Mucosa of descending colon (tissue), 3 donors: ENCODE measurements at regions of chr3 and their contacts with region 1.

Region 1: GRCh38 chr3:45760878-45761711 is 35.2 kb downstream of the SLC6A20 start:
- DNase-seq: peak in 2 of 3 donors; percentile 56 to 57
- ATAC-seq: peak; percentile 93
- H3K4me3 ChIP-seq: no peak overlapping the region
- H3K4me1 ChIP-seq: no peaks in the 10 kb centered on the region
- CTCF ChIP-seq: peak; percentile 63

Region 2: DNA sequence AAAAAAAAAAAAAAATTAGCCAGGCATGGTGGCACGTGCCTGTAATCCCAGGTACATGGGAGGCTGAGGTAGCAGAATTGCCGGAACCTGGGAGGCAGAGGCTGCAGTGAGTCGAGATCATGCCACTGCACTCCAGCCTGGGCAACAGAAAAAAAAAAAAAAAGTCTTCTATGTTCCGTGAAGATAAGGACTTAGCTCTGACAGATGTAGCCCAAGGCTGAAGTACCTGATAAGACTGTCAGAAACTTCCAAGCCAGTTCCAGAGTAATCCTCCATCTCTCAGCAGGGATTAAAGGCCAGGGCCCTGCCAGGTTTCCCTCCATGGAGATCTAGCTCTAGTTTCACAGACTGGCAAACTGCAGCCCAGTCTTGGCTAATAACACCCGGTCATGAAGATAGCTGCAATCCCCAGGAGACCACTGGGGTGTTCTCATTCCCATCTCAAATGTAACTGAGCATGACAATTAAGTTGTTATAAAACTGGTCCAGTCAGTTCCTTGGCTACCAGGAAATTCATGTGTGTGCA is 623.4 kb before region 1 on chr3:
- intact Hi-C with region 1: no loop called
- DNase-seq: no peak
- ATAC-seq: peak; percentile 43
- H3K4me3 ChIP-seq: no peak overlapping the region
- H3K4me1 ChIP-seq: peaks cover 57% of the 10 kb centered on the region
- CTCF ChIP-seq: no peak

Region 3: DNA sequence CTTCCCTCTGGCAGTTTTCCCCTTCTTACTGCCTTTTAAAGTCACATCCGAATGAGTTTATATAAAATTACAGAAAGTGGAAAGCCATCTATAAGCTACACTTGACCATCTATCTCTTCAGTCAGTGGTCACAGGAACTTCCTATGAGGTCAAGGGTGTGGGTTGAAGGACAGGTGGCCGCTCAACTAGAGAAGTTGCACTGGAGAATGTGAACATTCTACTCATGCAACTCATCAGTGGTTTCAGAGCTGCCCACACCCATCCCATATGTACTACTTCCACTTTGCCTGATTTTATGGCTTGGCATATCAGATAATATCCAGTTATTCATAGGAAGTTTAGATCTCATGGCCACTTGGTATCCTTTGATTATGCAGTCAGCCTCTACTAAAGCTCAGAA is 477.6 kb before region 1 on chr3:
- intact Hi-C with region 1: no loop called
- DNase-seq: no peak
- ATAC-seq: no peak
- H3K4me3 ChIP-seq: no peak overlapping the region
- H3K4me1 ChIP-seq: no peaks in the 10 kb centered on the region
- CTCF ChIP-seq: no peak

Region 4: DNA sequence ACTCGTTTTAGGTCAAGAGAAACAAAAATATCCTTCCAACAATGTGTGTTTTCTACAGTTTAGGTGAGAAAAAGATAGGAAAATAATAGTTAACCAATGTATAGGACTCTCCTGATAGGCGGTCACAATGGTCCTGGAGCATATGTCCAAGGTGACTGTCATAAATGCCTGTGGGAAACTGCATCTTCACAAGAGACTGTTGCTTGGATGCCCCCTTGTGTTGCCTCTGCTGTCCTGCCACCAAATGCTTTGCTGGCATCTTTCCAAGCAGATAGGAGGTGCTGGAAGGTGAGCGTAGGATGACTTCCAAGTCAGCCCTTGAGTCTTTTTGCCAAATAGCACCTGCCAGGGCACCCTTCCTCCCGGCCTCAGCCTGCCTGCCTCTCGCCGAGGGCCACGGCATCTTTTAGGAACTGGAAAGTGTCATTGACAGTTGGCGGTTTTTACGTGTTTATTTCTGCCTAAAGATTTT is 96.0 kb before region 1 on chr3:
- intact Hi-C with region 1: no loop called
- DNase-seq: peak in 1 of 3 donors; percentile 69
- ATAC-seq: peak; percentile 75
- H3K4me3 ChIP-seq: no peak overlapping the region
- H3K4me1 ChIP-seq: peaks cover 4% of the 10 kb centered on the region
- CTCF ChIP-seq: peak; percentile 20

Region 5: GRCh38 chr3:45915518-45916231 is 154.6 kb after region 1 on chr3:
- intact Hi-C with region 1: loop called in 1 of 2 experiments (anchors 10 kb)
- DNase-seq: peak; percentile 38 to 64 (median 54)
- ATAC-seq: peak; percentile 70
- H3K4me3 ChIP-seq: no peak overlapping the region
- H3K4me1 ChIP-seq: no peaks in the 10 kb centered on the region
- CTCF ChIP-seq: no peak

Region 6: GRCh38 chr3:45948311-45948781 is 187.3 kb after region 1 on chr3:
- intact Hi-C with region 1: no loop called
- DNase-seq: no peak
- ATAC-seq: no peak
- H3K4me3 ChIP-seq: no peak overlapping the region
- H3K4me1 ChIP-seq: no peaks in the 10 kb centered on the region
- CTCF ChIP-seq: no peak

Region 7: DNA sequence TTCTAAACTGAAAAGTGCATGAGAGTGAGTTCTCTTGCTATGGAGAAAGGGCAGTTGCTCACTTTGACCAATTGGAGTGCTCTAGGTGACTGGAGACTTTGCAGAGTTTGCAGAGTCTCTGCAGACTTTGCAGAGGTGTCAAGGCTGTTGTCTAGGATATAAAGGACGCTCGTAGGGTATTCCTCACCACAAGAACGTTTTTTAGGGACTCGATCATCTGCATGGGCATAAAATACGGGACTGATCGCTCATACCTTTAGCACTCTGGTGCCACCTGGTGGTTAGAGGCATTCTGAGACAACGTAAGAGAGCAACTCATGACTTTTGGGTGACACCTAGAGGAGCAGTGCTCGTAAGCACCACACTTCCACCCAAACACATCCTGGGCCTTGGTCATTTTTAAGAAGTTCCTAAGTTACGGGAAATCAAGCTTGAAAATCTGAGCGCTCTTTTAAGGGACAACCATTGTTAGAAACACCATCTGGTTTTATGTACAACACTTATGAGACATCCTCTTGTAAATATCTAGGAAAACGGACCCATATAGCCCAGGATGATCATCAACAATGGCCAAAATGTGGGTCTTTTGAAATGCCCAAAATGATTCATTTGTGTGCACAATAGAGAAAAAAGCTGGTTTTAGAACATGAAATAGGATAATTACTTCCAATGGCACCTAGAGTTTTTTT is 317.8 kb after region 1 on chr3:
- intact Hi-C with region 1: loop called (anchors 5 to 10 kb)
- DNase-seq: peak in 2 of 3 donors; percentile 67 to 100
- ATAC-seq: peak; percentile 100
- H3K4me3 ChIP-seq: no peak overlapping the region
- H3K4me1 ChIP-seq: no peaks in the 10 kb centered on the region
- CTCF ChIP-seq: peak; percentile 81

Region 8: GRCh38 chr3:46089237-46090011 is 328.3 kb after region 1 on chr3:
- intact Hi-C with region 1: loop called in 1 of 2 experiments (anchors 10 kb)
- DNase-seq: peak; percentile 30 to 69 (median 55)
- ATAC-seq: peak; percentile 77
- H3K4me3 ChIP-seq: no peak overlapping the region
- H3K4me1 ChIP-seq: no peaks in the 10 kb centered on the region
- CTCF ChIP-seq: no peak